CD8-positive, alpha-beta T cell (primary cell): ENCODE measurements at regions of chr16 and their contacts with region 1.

Region 1: DNA sequence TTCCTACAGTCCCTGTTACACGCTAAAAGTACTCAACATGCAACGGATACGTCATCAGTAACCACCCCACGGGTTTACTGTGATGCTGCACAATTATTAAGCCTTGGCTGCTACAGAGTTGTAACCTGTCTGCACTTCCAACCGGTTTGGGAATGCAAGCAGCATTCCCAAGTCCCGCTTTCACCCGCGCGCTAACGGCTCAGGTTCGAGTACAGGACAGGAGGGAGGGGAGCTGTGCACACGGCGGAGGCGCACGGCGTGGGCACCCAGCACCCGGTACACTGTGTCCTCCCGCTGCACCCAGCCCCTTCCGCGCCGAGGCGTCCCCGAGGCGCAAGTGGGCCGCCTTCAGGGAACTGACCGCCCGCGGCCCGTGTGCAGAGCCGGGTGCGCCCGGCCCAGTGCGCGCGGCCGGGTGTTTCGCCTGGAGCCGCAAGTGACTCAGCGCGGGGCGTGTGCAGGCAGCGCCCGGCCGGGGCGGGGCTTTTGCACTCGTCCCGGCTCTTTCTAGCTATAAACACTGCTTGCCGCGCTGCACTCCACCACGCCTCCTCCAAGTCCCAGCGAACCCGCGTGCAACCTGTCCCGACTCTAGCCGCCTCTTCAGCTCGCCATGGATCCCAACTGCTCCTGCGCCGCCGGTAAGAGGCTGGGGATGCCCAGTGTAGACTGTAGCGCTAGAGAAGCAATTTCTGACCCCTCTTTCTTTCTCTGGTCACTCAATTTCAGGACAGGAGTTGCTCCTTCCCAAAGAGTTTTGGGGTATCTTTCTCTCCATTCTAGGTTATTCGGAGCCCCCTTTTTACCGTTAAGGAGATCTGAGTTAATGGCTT is at the start of gene MT2A:
- DNase-seq: peak; percentile 68 to 94 (median 88)
- ATAC-seq: peak; percentile 75
- H3K4me3 ChIP-seq: peak within 1 kb of the TSS; percentile 91 to 95
- H3K4me3 Mint-ChIP-seq: peak within 1 kb of the TSS; percentile 98
- H3K27ac ChIP-seq: peak within 1 kb of the TSS; percentile 68 to 98
- H3K27ac Mint-ChIP-seq: peak within 1 kb of the TSS; percentile 94
- H3K4me1 ChIP-seq: peaks cover 37% of the 10 kb centered on the region
- H3K4me1 Mint-ChIP-seq: peaks cover 47% of the 10 kb centered on the region
- H3K27me3 ChIP-seq: no peaks in the 10 kb centered on the region
- H3K27me3 Mint-ChIP-seq: no peaks in the 10 kb centered on the region
- CTCF ChIP-seq: no peak
- total RNA-seq, gene MT2A: 71.0 to 95.7 TPM

Region 2: GRCh38 chr16:56450986-56451752 is 157.1 kb before region 1 on chr16 and contains the starts of genes NUDT21 and OGFOD1:
- CTCF ChIA-PET with region 1: no interaction called
- POLR2A ChIA-PET with region 1: no interaction called
- intact Hi-C with region 1: loop called (anchors 1 to 2 kb)
- DNase-seq: peak; percentile 82 to 98 (median 90)
- ATAC-seq: peak; percentile 98
- H3K4me3 ChIP-seq: peak within 1 kb of the TSS; percentile 85 to 87
- H3K4me3 Mint-ChIP-seq: peak within 1 kb of the TSS; percentile 97
- H3K27ac ChIP-seq: peak within 1 kb of the TSS; percentile 76 to 77
- H3K27ac Mint-ChIP-seq: peak within 1 kb of the TSS; percentile 94
- H3K4me1 ChIP-seq: peaks cover 31% of the 10 kb centered on the region
- H3K4me1 Mint-ChIP-seq: peaks cover 60% of the 10 kb centered on the region
- H3K27me3 ChIP-seq: no peaks in the 10 kb centered on the region
- H3K27me3 Mint-ChIP-seq: no peaks in the 10 kb centered on the region
- CTCF ChIP-seq: no peak
- total RNA-seq, gene NUDT21: 99.1 to 106 TPM
- total RNA-seq, gene OGFOD1: 17.0 to 21.5 TPM

Region 3: GRCh38 chr16:56625140-56625942 is 17.1 kb after region 1 on chr16 and contains the start of gene MT1E:
- CTCF ChIA-PET with region 1: interaction called, 3 read pairs
- POLR2A ChIA-PET with region 1: interaction called, 6 read pairs
- intact Hi-C with region 1: loop called (anchors 1 to 2 kb)
- DNase-seq: peak in 6 of 9 experiments; percentile 33 to 79 (median 50)
- ATAC-seq: peak; percentile 87
- H3K4me3 ChIP-seq: peak within 1 kb of the TSS; percentile 60 to 84
- H3K4me3 Mint-ChIP-seq: peak within 1 kb of the TSS; percentile 90
- H3K27ac ChIP-seq: peak within 1 kb of the TSS; percentile 24 to 46
- H3K27ac Mint-ChIP-seq: peak within 1 kb of the TSS; percentile 57
- H3K4me1 ChIP-seq: peaks cover 17% of the 10 kb centered on the region
- H3K4me1 Mint-ChIP-seq: peaks cover 12% of the 10 kb centered on the region
- H3K27me3 ChIP-seq: no peaks in the 10 kb centered on the region
- H3K27me3 Mint-ChIP-seq: peaks cover 13% of the 10 kb centered on the region
- CTCF ChIP-seq: no peak
- total RNA-seq, gene MT1E: 3.0 to 5.5 TPM

Region 4: DNA sequence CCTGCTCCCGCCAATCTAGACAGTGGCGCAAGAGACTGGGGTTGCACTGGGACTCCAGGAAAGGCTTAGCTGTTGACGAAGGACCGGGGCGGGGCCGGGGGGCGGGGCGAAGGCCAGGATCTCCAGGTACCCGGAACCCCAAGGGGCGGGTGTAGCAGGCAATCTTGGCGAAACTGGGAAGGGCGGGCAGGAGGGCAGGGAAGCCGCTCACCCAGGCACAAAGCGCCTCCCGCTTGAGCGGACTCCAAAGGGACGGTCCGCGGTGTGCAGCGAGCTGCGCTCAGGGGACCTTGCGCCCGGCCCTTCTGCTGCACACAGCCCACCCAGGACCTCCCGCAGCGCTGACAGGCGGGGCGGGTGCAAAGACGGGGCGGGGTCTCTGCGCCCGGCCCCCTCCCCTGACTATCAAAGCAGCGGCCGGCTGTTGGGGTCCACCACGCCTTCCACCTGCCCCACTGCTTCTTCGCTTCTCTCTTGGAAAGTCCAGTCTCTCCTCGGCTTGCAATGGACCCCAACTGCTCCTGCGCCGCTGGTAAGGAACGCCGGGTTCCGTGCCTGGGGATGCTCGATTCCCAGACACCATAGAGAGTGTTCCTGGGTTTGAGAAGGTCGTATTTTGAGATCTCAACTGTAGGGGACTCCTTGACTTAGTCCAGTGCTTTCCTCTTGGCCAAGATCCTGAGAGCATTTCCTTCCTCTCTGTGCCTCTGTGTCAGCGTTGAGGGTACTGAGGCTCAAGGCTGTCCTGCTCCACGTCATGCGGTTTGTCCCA is 49.5 kb after region 1 on chr16 and contains the start of gene MT1F:
- CTCF ChIA-PET with region 1: no interaction called
- POLR2A ChIA-PET with region 1: interaction called, 6 read pairs
- intact Hi-C with region 1: loop called (anchors 1 to 2 kb)
- DNase-seq: peak; percentile 32 to 86 (median 73)
- ATAC-seq: peak; percentile 78
- H3K4me3 ChIP-seq: peak within 1 kb of the TSS; percentile 68 to 70
- H3K4me3 Mint-ChIP-seq: peak within 1 kb of the TSS; percentile 97
- H3K27ac ChIP-seq: peak within 1 kb of the TSS; percentile 44 to 69
- H3K27ac Mint-ChIP-seq: peak within 1 kb of the TSS; percentile 94
- H3K4me1 ChIP-seq: peaks cover 20% of the 10 kb centered on the region
- H3K4me1 Mint-ChIP-seq: peaks cover 27% of the 10 kb centered on the region
- H3K27me3 ChIP-seq: no peaks in the 10 kb centered on the region
- H3K27me3 Mint-ChIP-seq: peaks cover 3% of the 10 kb centered on the region
- CTCF ChIP-seq: no peak
- total RNA-seq, gene MT1F: 5.6 to 7.4 TPM

Region 5: GRCh38 chr16:56729735-56730662 is 121.7 kb after region 1 on chr16 and contains the start of gene NUP93:
- CTCF ChIA-PET with region 1: no interaction called
- POLR2A ChIA-PET with region 1: no interaction called
- intact Hi-C with region 1: loop called in 1 of 2 experiments (anchors 1 kb)
- DNase-seq: peak; percentile 76 to 94 (median 90)
- ATAC-seq: peak; percentile 94
- H3K4me3 ChIP-seq: peak within 1 kb of the TSS; percentile 79 to 87
- H3K4me3 Mint-ChIP-seq: no peak within 1 kb of the TSS
- H3K27ac ChIP-seq: peak within 1 kb of the TSS; percentile 58 to 81
- H3K27ac Mint-ChIP-seq: peak within 1 kb of the TSS; percentile 90
- H3K4me1 ChIP-seq: peaks cover 34% of the 10 kb centered on the region
- H3K4me1 Mint-ChIP-seq: peaks cover 23% of the 10 kb centered on the region
- H3K27me3 ChIP-seq: no peaks in the 10 kb centered on the region
- H3K27me3 Mint-ChIP-seq: no peaks in the 10 kb centered on the region
- CTCF ChIP-seq: no peak
- total RNA-seq, gene NUP93: 68.2 to 68.5 TPM